Activated CD4-positive, alpha-beta T cell treated with anti-CD3 and anti-CD28 coated beads for 36 hours (primary cell): ENCODE measurements at regions of chr6 and their contacts with region 1.

Region 1: GRCh38 chr6:5199283-5199682 is 61.5 kb downstream of the LYRM4 start:
- DNase-seq: peak; percentile 28
- ATAC-seq: peak; percentile 93
- H3K4me3 Mint-ChIP-seq: no peak overlapping the region
- H3K27ac Mint-ChIP-seq: no peak overlapping the region
- H3K4me1 Mint-ChIP-seq: peaks cover 32% of the 10 kb centered on the region
- H3K27me3 Mint-ChIP-seq: no peaks in the 10 kb centered on the region

Region 2: GRCh38 chr6:5174244-5174643 is 25.0 kb before region 1 on chr6:
- CTCF ChIA-PET with region 1: interaction called, 5 read pairs
- POLR2A ChIA-PET with region 1: interaction called, 4 read pairs
- intact Hi-C with region 1: loop called (anchors 1 to 2 kb)
- DNase-seq: peak; percentile 79
- ATAC-seq: peak; percentile 96
- H3K4me3 Mint-ChIP-seq: peak overlapping the region; percentile 57
- H3K27ac Mint-ChIP-seq: peak overlapping the region; percentile 93
- H3K4me1 Mint-ChIP-seq: peaks cover 54% of the 10 kb centered on the region
- H3K27me3 Mint-ChIP-seq: no peaks in the 10 kb centered on the region

Region 3: GRCh38 chr6:5279891-5280338 is 80.6 kb after region 1 on chr6:
- CTCF ChIA-PET with region 1: interaction called, 3 read pairs
- POLR2A ChIA-PET with region 1: interaction called, 3 read pairs
- intact Hi-C with region 1: loop called in 1 of 2 experiments (anchors 1 kb)
- DNase-seq: peak; percentile 71
- ATAC-seq: peak; percentile 92
- H3K4me3 Mint-ChIP-seq: peak overlapping the region; percentile 10
- H3K27ac Mint-ChIP-seq: peak overlapping the region; percentile 91
- H3K4me1 Mint-ChIP-seq: peaks cover 43% of the 10 kb centered on the region
- H3K27me3 Mint-ChIP-seq: no peaks in the 10 kb centered on the region